ENCODE measurements at regions of chr1 and their contacts with region 1.

Region 1: GRCh38 chr1:65687428-65688214 is 105.1 kb upstream of the PDE4B start:
- DNase-seq: peak; percentile 41
- H3K4me3 ChIP-seq: no peak overlapping the region
- H3K27ac ChIP-seq: no peak overlapping the region
- H3K4me1 ChIP-seq: no peaks in the 10 kb centered on the region
- H3K27me3 ChIP-seq: no peaks in the 10 kb centered on the region
- CTCF ChIP-seq: peak; percentile 81 to 86

Region 2: GRCh38 chr1:64686828-64687724 is 1000.5 kb before region 1 on chr1:
- CTCF ChIA-PET with region 1: no interaction called
- dilution Hi-C with region 1: no loop called
- in situ Hi-C with region 1: no loop called
- intact Hi-C with region 1: loop called (anchors 5 kb)
- DNase-seq: peak; percentile 21
- H3K4me3 ChIP-seq: no peak overlapping the region
- H3K27ac ChIP-seq: peak overlapping the region; percentile 3
- H3K4me1 ChIP-seq: peaks cover 14% of the 10 kb centered on the region
- H3K27me3 ChIP-seq: no peaks in the 10 kb centered on the region
- CTCF ChIP-seq: peak; percentile 86 to 88

Region 3: GRCh38 chr1:65059930-65060538 is 627.6 kb before region 1 on chr1:
- CTCF ChIA-PET with region 1: no interaction called
- dilution Hi-C with region 1: no loop called
- in situ Hi-C with region 1: loop called (anchors 10 to 25 kb)
- intact Hi-C with region 1: loop called (anchors 1 kb)
- DNase-seq: peak; percentile 25
- H3K4me3 ChIP-seq: no peak overlapping the region
- H3K27ac ChIP-seq: no peak overlapping the region
- H3K4me1 ChIP-seq: no peaks in the 10 kb centered on the region
- H3K27me3 ChIP-seq: no peaks in the 10 kb centered on the region
- CTCF ChIP-seq: peak; percentile 54 to 72

Region 4: GRCh38 chr1:65075123-65075976 is 612.3 kb before region 1 on chr1:
- CTCF ChIA-PET with region 1: interaction called, 5 read pairs
- dilution Hi-C with region 1: no loop called
- in situ Hi-C with region 1: loop called in 1 of 2 experiments (anchors 25 kb)
- intact Hi-C with region 1: loop called (anchors 5 kb)
- DNase-seq: peak; percentile 36
- H3K4me3 ChIP-seq: no peak overlapping the region
- H3K27ac ChIP-seq: no peak overlapping the region
- H3K4me1 ChIP-seq: no peaks in the 10 kb centered on the region
- H3K27me3 ChIP-seq: no peaks in the 10 kb centered on the region
- CTCF ChIP-seq: peak; percentile 68 to 78

Region 5: DNA sequence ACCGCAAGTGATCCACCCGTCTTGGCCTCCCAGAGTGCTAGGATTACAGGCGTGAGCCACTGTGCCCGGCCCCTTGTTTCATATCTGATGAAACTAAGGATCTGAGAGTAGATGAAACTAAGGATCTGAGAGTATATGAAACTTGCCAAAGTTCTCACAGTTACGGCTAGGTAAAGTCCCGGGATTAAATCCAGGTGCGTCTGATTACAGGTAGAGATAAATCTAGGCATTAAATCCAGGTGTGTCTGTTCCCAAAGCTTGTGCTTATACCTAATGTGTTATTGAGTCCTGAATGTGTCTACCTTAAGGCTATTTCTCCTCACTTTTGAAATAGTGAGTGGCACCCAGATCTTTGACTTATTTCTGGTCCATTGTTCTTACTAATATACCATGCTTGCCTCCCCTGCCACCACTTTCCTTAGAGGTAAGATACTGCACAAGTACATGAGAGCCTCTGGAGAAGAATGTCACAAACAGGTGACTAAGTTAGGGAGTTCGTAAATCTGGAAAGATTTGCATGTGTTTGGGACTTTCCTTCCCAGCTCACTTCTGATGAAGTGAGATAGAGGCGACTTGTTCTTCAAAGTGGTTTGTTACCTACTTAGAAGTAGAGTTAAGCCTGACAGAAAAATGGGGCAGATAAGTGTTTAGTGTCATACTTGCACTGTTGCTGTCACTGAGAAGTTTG is 473.1 kb before region 1 on chr1:
- CTCF ChIA-PET with region 1: interaction called, 4 read pairs
- dilution Hi-C with region 1: no loop called
- in situ Hi-C with region 1: no loop called
- intact Hi-C with region 1: loop called (anchors 1 kb)
- DNase-seq: no peak
- H3K4me3 ChIP-seq: no peak overlapping the region
- H3K27ac ChIP-seq: no peak overlapping the region
- H3K4me1 ChIP-seq: peaks cover 4% of the 10 kb centered on the region
- H3K27me3 ChIP-seq: no peaks in the 10 kb centered on the region
- CTCF ChIP-seq: no peak

Region 6: DNA sequence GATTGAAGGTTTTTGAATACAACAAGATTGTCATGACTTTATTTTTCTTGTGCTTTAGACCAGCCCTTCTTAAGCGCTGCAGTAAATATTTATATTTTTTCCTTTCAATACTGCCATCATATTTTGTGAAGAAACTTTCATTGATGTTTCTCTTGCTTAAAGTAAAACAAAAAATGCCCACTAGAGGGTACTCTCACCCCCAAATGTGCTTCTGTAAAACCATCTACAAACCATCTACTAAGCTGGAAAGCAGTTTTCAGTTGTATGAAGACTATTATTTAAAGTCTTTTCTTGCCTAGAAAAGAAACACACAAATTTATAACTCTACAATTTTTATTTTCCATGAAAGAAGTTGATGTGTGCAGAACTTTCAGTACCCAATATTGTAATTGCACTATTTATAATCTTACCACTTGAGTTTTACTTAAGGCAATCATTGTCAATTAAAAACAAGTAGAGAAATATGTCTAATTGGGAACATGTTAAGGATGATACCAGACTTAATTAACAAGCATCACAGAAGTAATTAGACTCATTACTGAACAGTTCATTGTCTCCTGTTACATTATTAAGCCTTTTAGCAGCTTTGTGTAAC is 256.4 kb before region 1 on chr1:
- CTCF ChIA-PET with region 1: interaction called, 3 read pairs
- dilution Hi-C with region 1: no loop called
- in situ Hi-C with region 1: no loop called
- intact Hi-C with region 1: loop called (anchors 2 kb)
- DNase-seq: no peak
- H3K4me3 ChIP-seq: no peak overlapping the region
- H3K27ac ChIP-seq: peak overlapping the region; percentile 78
- H3K4me1 ChIP-seq: peaks cover 46% of the 10 kb centered on the region
- H3K27me3 ChIP-seq: no peaks in the 10 kb centered on the region
- CTCF ChIP-seq: peak; percentile 34 to 48